MCF 10A (cell line): ENCODE measurements at regions of chr2 and their contacts with region 1.

Region 1: DNA sequence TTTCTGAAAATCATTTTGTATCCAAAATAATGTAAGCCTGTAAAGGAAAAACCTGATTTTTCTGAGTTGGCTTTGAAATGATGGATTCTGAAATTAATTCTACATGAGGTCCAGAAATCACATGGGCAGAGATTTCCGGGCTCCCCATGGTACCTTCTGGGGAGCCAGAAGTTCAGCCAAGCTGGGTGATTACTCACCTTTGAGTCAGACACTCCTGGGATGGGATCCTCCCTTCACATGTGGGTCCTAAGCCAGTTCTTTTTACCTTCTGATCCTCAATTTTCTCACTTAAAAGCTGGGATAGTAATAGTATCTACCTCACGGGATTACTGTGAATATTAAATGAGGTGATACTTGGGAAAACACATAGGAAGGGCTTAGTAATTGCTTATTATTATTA is 179.8 kb upstream of the EPAS1 start:
- DNase-seq: peak; percentile 81
- H3K4me3 Mint-ChIP-seq: no peak overlapping the region
- H3K27ac Mint-ChIP-seq: no peak overlapping the region
- H3K4me1 Mint-ChIP-seq: peaks cover 29% of the 10 kb centered on the region
- H3K27me3 Mint-ChIP-seq: no peaks in the 10 kb centered on the region
- CTCF ChIP-seq: no peak

Region 2: GRCh38 chr2:46097714-46098480 is 19.5 kb before region 1 on chr2:
- CTCF ChIA-PET with region 1: interaction called, 4 read pairs
- POLR2A ChIA-PET with region 1: interaction called, 18 read pairs
- intact Hi-C with region 1: loop called (anchors 2 kb)
- DNase-seq: peak; percentile 92
- H3K4me3 Mint-ChIP-seq: peak overlapping the region; percentile 19
- H3K27ac Mint-ChIP-seq: peak overlapping the region; percentile 92
- H3K4me1 Mint-ChIP-seq: peaks cover 20% of the 10 kb centered on the region
- H3K27me3 Mint-ChIP-seq: no peaks in the 10 kb centered on the region
- CTCF ChIP-seq: no peak